CD14-positive monocyte (primary cell): ENCODE measurements at regions of chr2 and their contacts with region 1.

Region 1: GRCh38 chr2:118003396-118003824 is 10.5 kb downstream of the CCDC93 start:
- DNase-seq: peak; percentile 74 to 87 (median 85)
- H3K4me3 ChIP-seq: no peak overlapping the region
- H3K4me3 Mint-ChIP-seq: no peak overlapping the region
- H3K27ac ChIP-seq: peak overlapping the region in 1 of 2 donors; percentile 39
- H3K27ac Mint-ChIP-seq: peak overlapping the region in 4 of 7 donors; percentile 59 to 83 (median 68)
- H3K4me1 ChIP-seq: no peaks in the 10 kb centered on the region
- H3K4me1 Mint-ChIP-seq: peaks cover 2% of the 10 kb centered on the region
- H3K27me3 ChIP-seq: no peaks in the 10 kb centered on the region
- H3K27me3 Mint-ChIP-seq: peaks cover 0 to 2% (median 0%) of the 10 kb centered on the region in 3 donors
- CTCF ChIP-seq: peak; percentile 87

Region 2: DNA sequence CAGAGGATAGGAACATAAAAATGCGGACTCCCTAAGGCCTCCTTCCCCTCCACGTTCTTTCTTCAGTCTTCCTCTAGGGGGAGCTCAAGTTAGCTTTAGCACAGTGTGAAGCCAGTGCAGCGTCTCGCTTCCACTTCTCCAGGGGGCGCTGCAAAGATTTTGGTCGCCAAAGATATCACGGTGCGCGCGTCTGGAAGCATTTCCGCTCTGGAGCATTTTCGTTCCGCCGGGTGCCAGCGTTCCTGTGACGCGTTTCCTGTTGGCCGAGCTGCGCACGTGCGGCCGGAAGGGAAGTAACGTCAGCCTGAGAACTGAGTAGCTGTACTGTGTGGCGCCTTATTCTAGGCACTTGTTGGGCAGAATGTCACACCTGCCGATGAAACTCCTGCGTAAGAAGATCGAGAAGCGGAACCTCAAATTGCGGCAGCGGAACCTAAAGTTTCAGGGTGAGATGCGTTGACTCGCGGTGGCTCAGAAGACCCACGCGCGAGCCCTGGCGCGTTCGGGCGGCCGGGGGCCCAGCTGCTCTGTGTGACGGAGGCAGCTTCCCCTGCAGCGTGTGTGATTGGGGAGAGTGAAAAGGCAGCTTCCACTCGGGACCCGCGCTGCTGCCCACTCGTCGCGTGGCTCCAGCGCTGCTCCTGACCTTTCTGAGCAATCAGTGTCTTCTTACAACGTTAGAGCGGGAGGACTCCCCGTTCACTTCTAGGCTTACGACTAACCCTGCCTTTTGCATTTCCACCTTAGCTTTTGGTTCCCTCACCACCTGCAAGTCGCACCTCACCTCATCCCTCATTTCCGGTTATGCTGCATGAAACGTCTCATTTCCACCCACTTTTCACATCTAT is 188.8 kb before region 1 on chr2 and contains the start of gene DDX18:
- intact Hi-C with region 1: loop called (anchors 5 to 10 kb)
- DNase-seq: peak; percentile 99
- H3K4me3 ChIP-seq: peak within 1 kb of the TSS; percentile 60 to 80 (median 75)
- H3K4me3 Mint-ChIP-seq: peak within 1 kb of the TSS; percentile 93 to 98
- H3K27ac ChIP-seq: peak within 1 kb of the TSS; percentile 89 to 94
- H3K27ac Mint-ChIP-seq: peak within 1 kb of the TSS; percentile 97 to 99 (median 98)
- H3K4me1 ChIP-seq: peaks cover 10 to 17% of the 10 kb centered on the region in 2 donors
- H3K4me1 Mint-ChIP-seq: peaks cover 11% of the 10 kb centered on the region
- H3K27me3 ChIP-seq: no peaks in the 10 kb centered on the region
- H3K27me3 Mint-ChIP-seq: peaks cover 4 to 8% (median 7%) of the 10 kb centered on the region in 3 donors
- CTCF ChIP-seq: peak; percentile 99
- polyA plus RNA-seq, gene DDX18: 19.1 to 21.1 (median 19.7) TPM

Region 3: GRCh38 chr2:117958186-117958585 is 45.2 kb before region 1 on chr2:
- intact Hi-C with region 1: loop called in 1 of 2 experiments (anchors 5 kb)
- DNase-seq: peak in 2 of 3 donors; percentile 2 to 21
- H3K4me3 ChIP-seq: no peak overlapping the region
- H3K4me3 Mint-ChIP-seq: no peak overlapping the region
- H3K27ac ChIP-seq: peak overlapping the region in 1 of 2 donors; percentile 48
- H3K27ac Mint-ChIP-seq: peak overlapping the region in 6 of 7 donors; percentile 16 to 79 (median 42)
- H3K4me1 ChIP-seq: peaks cover 5 to 7% of the 10 kb centered on the region in 2 donors
- H3K4me1 Mint-ChIP-seq: peaks cover 11% of the 10 kb centered on the region
- H3K27me3 ChIP-seq: no peaks in the 10 kb centered on the region
- H3K27me3 Mint-ChIP-seq: peaks cover 0 to 2% (median 0%) of the 10 kb centered on the region in 3 donors
- CTCF ChIP-seq: no peak

Region 4: DNA sequence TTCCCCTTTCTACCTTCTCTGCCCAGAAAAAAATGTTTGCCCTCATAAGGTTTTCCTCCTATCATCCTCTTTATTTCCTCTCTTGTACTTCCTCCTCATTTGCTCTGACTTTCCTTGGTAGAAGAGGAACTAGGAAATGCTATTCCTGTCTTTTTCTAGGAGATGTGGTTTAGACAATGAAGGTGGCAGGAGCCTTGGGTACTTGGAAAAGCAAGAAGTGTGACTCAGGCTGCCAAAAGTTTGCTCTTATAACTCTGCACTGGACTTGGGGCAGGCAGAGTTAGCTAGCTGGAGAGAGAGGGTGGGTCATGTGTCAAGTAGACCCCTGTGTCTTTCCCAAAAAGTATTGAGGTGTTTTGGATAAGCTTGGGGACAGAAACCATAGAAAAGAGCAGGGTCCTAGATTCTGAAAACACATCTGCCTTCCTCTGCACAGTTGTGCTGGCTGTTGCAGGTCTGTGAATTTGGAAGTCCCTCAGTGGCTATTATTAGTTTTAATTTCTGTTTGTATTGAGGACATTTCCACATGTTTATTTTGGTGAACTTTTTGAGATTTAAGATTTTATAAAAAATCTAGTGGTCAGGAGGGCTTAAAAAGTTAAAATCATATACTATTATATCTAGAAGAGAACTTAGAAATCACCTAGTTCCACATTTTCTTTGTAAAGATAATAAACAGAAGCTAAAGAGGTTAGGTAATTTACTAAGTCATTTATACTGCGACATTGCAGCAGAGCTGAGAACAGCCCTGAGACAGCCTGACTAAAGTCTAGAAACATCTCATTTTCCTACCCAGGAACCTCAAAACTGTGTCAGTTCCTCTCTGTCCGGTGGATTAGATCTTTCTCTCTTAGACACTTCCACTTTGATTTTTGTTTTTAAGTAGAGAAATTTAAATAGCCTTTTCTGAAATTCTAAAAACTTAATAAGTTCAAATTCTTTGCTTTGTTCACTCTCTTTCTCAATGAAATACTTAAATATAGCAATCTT is 100.8 kb after region 1 on chr2:
- intact Hi-C with region 1: no loop called
- DNase-seq: peak; percentile 50 to 71 (median 51)
- H3K4me3 ChIP-seq: peak overlapping the region in 1 of 3 experiments; percentile 20
- H3K4me3 Mint-ChIP-seq: peak overlapping the region in 1 of 2 donors; percentile 39
- H3K27ac ChIP-seq: peak overlapping the region; percentile 61 to 78
- H3K27ac Mint-ChIP-seq: peak overlapping the region; percentile 74 to 88 (median 83)
- H3K4me1 ChIP-seq: peaks cover 36 to 39% of the 10 kb centered on the region in 2 donors
- H3K4me1 Mint-ChIP-seq: peaks cover 37% of the 10 kb centered on the region
- H3K27me3 ChIP-seq: no peaks in the 10 kb centered on the region
- H3K27me3 Mint-ChIP-seq: no peaks in the 10 kb centered on the region
- CTCF ChIP-seq: no peak

Region 5: GRCh38 chr2:118278046-118278445 is 274.6 kb after region 1 on chr2:
- intact Hi-C with region 1: no loop called
- DNase-seq: no peak
- H3K4me3 ChIP-seq: no peak overlapping the region
- H3K4me3 Mint-ChIP-seq: no peak overlapping the region
- H3K27ac ChIP-seq: no peak overlapping the region
- H3K27ac Mint-ChIP-seq: no peak overlapping the region
- H3K4me1 ChIP-seq: no peaks in the 10 kb centered on the region
- H3K4me1 Mint-ChIP-seq: no peaks in the 10 kb centered on the region
- H3K27me3 ChIP-seq: peaks cover 0 to 5% of the 10 kb centered on the region in 2 donors
- H3K27me3 Mint-ChIP-seq: peaks cover 5 to 20% (median 9%) of the 10 kb centered on the region in 3 donors
- CTCF ChIP-seq: no peak